Activated CD8-positive, alpha-beta T cell treated with anti-CD3 and anti-CD28 coated beads, Interleukin-2, amount 10 ng/mL, durations not matched to agents 7 days and 5 days (primary cell): ENCODE measurements at regions of chr21 and their contacts with region 1.

Region 1: GRCh38 chr21:42220138-42220701 is 1.3 kb downstream of the ABCG1 start:
- DNase-seq: peak; percentile 84
- ATAC-seq: peak; percentile 77
- H3K4me3 Mint-ChIP-seq: peak overlapping the region; percentile 82
- H3K27ac Mint-ChIP-seq: peak overlapping the region; percentile 78
- H3K4me1 Mint-ChIP-seq: peaks cover 16% of the 10 kb centered on the region
- H3K27me3 Mint-ChIP-seq: no peaks in the 10 kb centered on the region

Region 2: GRCh38 chr21:42187976-42188653 is 32.1 kb before region 1 on chr21:
- CTCF ChIA-PET with region 1: interaction called, 38 read pairs
- POLR2A ChIA-PET with region 1: interaction called, 21 read pairs
- DNase-seq: peak; percentile 93
- ATAC-seq: peak; percentile 95
- H3K4me3 Mint-ChIP-seq: peak overlapping the region; percentile 53
- H3K27ac Mint-ChIP-seq: peak overlapping the region; percentile 94
- H3K4me1 Mint-ChIP-seq: peaks cover 76% of the 10 kb centered on the region
- H3K27me3 Mint-ChIP-seq: peaks cover 6% of the 10 kb centered on the region

Region 3: GRCh38 chr21:42193131-42193671 is 27.0 kb before region 1 on chr21:
- CTCF ChIA-PET with region 1: interaction called, 38 read pairs
- POLR2A ChIA-PET with region 1: interaction called, 21 read pairs
- DNase-seq: peak; percentile 87
- ATAC-seq: peak; percentile 60
- H3K4me3 Mint-ChIP-seq: peak overlapping the region; percentile 16
- H3K27ac Mint-ChIP-seq: peak overlapping the region; percentile 71
- H3K4me1 Mint-ChIP-seq: peaks cover 77% of the 10 kb centered on the region
- H3K27me3 Mint-ChIP-seq: peaks cover 10% of the 10 kb centered on the region

Region 4: DNA sequence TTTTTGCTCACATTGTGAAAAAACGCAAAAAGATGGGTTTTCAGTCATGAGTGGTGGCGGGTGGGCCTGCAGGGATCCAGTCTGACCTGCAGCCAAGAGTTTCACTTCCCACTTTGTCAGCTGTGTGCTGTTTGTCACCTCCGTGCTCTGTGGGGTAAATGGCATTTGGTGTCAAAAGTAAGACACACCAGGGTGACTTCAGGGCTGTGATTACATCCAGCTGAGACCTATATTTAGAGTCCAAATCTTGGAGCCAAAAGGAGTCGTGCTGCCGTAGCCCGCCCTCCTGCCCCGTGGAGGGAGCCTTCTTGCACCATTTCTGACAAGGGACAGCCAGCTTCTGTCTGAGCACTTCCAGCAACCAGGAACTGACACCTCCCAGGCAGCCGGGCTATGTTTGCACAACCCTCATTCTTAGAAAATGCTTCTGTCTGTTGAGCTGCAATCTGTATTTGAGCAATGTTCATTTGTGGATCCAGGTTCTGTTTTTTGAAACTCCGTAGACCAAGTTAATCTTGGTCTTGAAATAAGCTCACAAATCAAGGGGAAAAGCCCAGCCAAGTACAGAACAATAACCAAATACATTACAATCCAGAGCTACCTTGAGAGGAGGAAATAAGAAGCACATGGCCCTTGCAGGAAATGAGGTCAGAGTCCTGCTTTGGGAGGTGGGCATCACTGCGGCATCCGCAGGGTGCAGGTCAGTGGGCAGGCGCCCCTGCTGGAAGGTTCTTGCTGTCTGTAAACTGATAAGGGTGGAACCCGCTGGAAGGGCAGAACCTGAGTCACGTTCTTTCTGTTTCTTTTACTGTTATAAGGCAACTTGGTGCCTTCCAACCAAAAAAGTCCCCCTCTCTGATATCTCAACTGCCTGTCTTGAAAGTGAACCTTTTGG is 13.1 kb after region 1 on chr21:
- CTCF ChIA-PET with region 1: interaction called, 43 read pairs
- POLR2A ChIA-PET with region 1: interaction called, 104 read pairs
- DNase-seq: peak; percentile 84
- ATAC-seq: peak; percentile 55
- H3K4me3 Mint-ChIP-seq: peak overlapping the region; percentile 63
- H3K27ac Mint-ChIP-seq: peak overlapping the region; percentile 85
- H3K4me1 Mint-ChIP-seq: peaks cover 98% of the 10 kb centered on the region
- H3K27me3 Mint-ChIP-seq: no peaks in the 10 kb centered on the region

Region 5: GRCh38 chr21:42238185-42238934 is 18.1 kb after region 1 on chr21:
- CTCF ChIA-PET with region 1: interaction called, 43 read pairs
- POLR2A ChIA-PET with region 1: interaction called, 104 read pairs
- DNase-seq: peak; percentile 68
- ATAC-seq: peak; percentile 41
- H3K4me3 Mint-ChIP-seq: peak overlapping the region; percentile 47
- H3K27ac Mint-ChIP-seq: peak overlapping the region; percentile 75
- H3K4me1 Mint-ChIP-seq: peaks cover 62% of the 10 kb centered on the region
- H3K27me3 Mint-ChIP-seq: no peaks in the 10 kb centered on the region

Region 6: GRCh38 chr21:42248783-42249597 is 28.8 kb after region 1 on chr21:
- CTCF ChIA-PET with region 1: no interaction called
- POLR2A ChIA-PET with region 1: no interaction called
- DNase-seq: no peak
- ATAC-seq: no peak
- H3K4me3 Mint-ChIP-seq: no peak overlapping the region
- H3K27ac Mint-ChIP-seq: no peak overlapping the region
- H3K4me1 Mint-ChIP-seq: peaks cover 8% of the 10 kb centered on the region
- H3K27me3 Mint-ChIP-seq: peaks cover 2% of the 10 kb centered on the region